SK-N-SH (cell line): ENCODE measurements at regions of chr3 and their contacts with region 1.

Region 1: GRCh38 chr3:132730891-132731580 is 8.8 kb upstream of the NPHP3 start:
- DNase-seq: peak; percentile 46
- H3K4me3 ChIP-seq: no peak overlapping the region; a peak in 1 of 4 replicates
- H3K27ac ChIP-seq: no peak overlapping the region; a peak in 1 of 4 replicates
- H3K4me1 ChIP-seq: no peaks in the 10 kb centered on the region; a peak in 1 of 4 replicates
- H3K27me3 ChIP-seq: no peaks in the 10 kb centered on the region
- CTCF ChIP-seq: peak; percentile 68
- EP300 ChIP-seq: no peak
- RAD21 ChIP-seq: peak; percentile 96

Region 2: GRCh38 chr3:132749786-132750185 is 18.8 kb after region 1 on chr3:
- CTCF ChIA-PET with region 1: interaction called, 19 read pairs
- POLR2A ChIA-PET with region 1: no interaction called
- DNase-seq: no peak
- H3K4me3 ChIP-seq: no peak overlapping the region
- H3K27ac ChIP-seq: no peak overlapping the region
- H3K4me1 ChIP-seq: no peaks in the 10 kb centered on the region
- H3K27me3 ChIP-seq: no peaks in the 10 kb centered on the region
- CTCF ChIP-seq: no peak
- EP300 ChIP-seq: no peak
- RAD21 ChIP-seq: no peak

Region 3: GRCh38 chr3:133384331-133385027 is 653.4 kb after region 1 on chr3:
- CTCF ChIA-PET with region 1: interaction called, 84 read pairs
- POLR2A ChIA-PET with region 1: no interaction called
- DNase-seq: peak; percentile 88
- H3K4me3 ChIP-seq: peak overlapping the region in 1 of 2 experiments; percentile 53; a peak in 1 of 4 replicates
- H3K27ac ChIP-seq: peak overlapping the region in 1 of 2 experiments; percentile 82; a peak in 2 of 4 replicates
- H3K4me1 ChIP-seq: peaks cover 0 to 53% of the 10 kb centered on the region in 2 experiments; a peak in 2 of 4 replicates
- H3K27me3 ChIP-seq: no peaks in the 10 kb centered on the region
- CTCF ChIP-seq: peak; percentile 88
- EP300 ChIP-seq: peak in 1 of 2 experiments; percentile 70; a peak in 2 of 4 replicates
- RAD21 ChIP-seq: peak; percentile 99

Region 4: GRCh38 chr3:133412183-133413132 is 681.4 kb after region 1 on chr3:
- CTCF ChIA-PET with region 1: interaction called, 10 read pairs
- POLR2A ChIA-PET with region 1: no interaction called
- DNase-seq: no peak
- H3K4me3 ChIP-seq: no peak overlapping the region
- H3K27ac ChIP-seq: no peak overlapping the region
- H3K4me1 ChIP-seq: peaks cover 0 to 7% of the 10 kb centered on the region in 2 experiments; a peak in 2 of 4 replicates
- H3K27me3 ChIP-seq: no peaks in the 10 kb centered on the region
- CTCF ChIP-seq: no peak
- EP300 ChIP-seq: no peak
- RAD21 ChIP-seq: no peak

Region 5: DNA sequence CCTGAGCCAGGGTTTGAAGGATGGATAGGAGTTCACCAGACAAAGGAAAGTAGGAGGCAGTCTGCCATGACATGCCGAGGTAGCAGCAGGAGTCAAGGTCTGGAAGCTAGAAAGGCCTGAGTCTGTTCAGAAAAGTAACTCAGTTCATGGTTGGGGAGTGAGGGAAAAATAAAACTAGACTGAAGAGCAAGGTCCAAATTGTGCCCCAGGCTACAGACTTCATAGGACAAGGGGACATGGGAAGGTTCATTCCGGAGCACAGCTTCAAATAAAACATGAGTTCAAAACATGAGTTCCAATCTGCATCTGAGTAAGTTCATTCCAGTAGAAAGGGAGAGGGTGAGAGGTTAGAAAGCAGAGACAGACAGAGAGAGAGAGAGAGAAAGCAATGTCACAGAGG is 708.5 kb after region 1 on chr3:
- CTCF ChIA-PET with region 1: interaction called, 10 read pairs
- POLR2A ChIA-PET with region 1: no interaction called
- DNase-seq: no peak
- H3K4me3 ChIP-seq: no peak overlapping the region
- H3K27ac ChIP-seq: no peak overlapping the region
- H3K4me1 ChIP-seq: no peaks in the 10 kb centered on the region; a peak in 1 of 4 replicates
- H3K27me3 ChIP-seq: no peaks in the 10 kb centered on the region
- CTCF ChIP-seq: no peak
- EP300 ChIP-seq: no peak
- RAD21 ChIP-seq: no peak

Region 6: GRCh38 chr3:133578548-133579191 is 847.6 kb after region 1 on chr3:
- CTCF ChIA-PET with region 1: interaction called, 20 read pairs
- POLR2A ChIA-PET with region 1: interaction called, 3 read pairs
- DNase-seq: peak; percentile 74
- H3K4me3 ChIP-seq: peak overlapping the region in 1 of 2 experiments; percentile 14; a peak in 1 of 4 replicates
- H3K27ac ChIP-seq: no peak overlapping the region; a peak in 1 of 4 replicates
- H3K4me1 ChIP-seq: peaks cover 11 to 17% of the 10 kb centered on the region in 2 experiments; a peak in 2 of 4 replicates
- H3K27me3 ChIP-seq: no peaks in the 10 kb centered on the region
- CTCF ChIP-seq: peak; percentile 68
- EP300 ChIP-seq: no peak
- RAD21 ChIP-seq: peak; percentile 68